Right cardiac atrium (tissue), 5 donors: ENCODE measurements at regions of chr11 and their contacts with region 1.

Region 1: GRCh38 chr11:12888525-12889158 is 120.5 kb upstream of the RASSF10 start:
- DNase-seq: peak; percentile 90 to 97 (median 92)
- ATAC-seq: peak; percentile 91 to 94
- H3K4me3 ChIP-seq: no peak overlapping the region
- H3K27ac ChIP-seq: peak overlapping the region; percentile 93
- H3K4me1 ChIP-seq: peaks cover 14% of the 10 kb centered on the region
- H3K27me3 ChIP-seq: no peaks in the 10 kb centered on the region

Region 2: DNA sequence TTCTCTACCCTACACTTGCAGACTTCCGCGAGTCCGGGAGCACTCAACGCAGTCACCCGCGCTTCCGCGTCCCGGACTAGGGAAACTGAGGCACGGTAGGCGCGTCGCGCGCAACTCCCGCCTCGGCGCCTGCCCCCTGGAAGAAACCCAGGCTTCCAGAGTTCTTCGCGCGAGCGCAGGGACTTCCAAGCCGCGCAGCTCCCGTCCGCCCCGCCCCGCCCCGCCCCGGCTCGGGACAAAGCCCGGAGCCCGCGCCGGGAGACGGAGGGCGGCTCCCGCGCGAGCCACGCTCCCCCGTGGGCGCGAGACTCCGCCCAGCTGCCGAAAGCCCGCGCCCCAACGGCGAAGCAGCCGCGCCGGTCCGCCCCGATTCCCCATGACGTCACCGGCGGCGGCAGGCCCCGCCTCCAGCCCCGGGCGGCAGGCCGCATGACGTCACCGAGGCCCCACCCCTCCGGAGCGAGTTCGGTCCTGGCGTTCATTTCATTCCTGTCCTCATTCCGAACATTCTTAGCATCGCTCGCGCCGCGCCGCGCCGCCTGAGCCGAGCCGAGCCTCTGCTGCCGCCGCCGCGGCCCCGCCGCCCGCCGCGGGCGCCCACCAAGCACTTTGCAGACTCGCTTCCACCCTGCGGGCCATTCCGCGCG is 214.6 kb before region 1 on chr11 and contains the start of gene TEAD1:
- intact Hi-C with region 1: loop called (anchors 5 to 10 kb)
- DNase-seq: peak; percentile 96 to 99 (median 98)
- ATAC-seq: peak; percentile 98
- H3K4me3 ChIP-seq: peak within 1 kb of the TSS; percentile 92
- H3K27ac ChIP-seq: peak within 1 kb of the TSS; percentile 93
- H3K4me1 ChIP-seq: no peaks in the 10 kb centered on the region
- H3K27me3 ChIP-seq: no peaks in the 10 kb centered on the region
- total RNA-seq, gene TEAD1: 81.3 to 105 (median 98.4) TPM

Region 3: DNA sequence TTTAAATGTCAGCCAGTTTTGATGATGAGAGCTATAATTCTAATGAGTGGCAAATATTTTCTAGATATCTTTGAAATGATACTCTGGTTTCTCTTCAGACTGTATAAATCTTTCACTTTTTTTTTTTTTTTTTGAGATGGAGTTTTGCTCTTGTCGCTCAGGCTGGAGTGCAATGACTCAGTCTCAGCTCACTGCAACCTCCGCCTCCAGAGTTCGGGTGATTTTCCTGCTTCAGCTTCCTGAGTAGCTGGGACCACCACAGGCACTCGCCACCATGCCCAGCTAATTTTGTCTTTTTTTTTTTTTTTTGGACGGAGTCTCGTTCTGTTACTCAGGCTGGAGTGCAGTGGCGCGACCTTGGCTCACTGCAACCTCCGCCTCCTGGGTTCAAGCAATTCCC is 100.8 kb before region 1 on chr11:
- intact Hi-C with region 1: no loop called
- DNase-seq: peak in 1 of 3 donors; percentile 39
- ATAC-seq: no peak
- H3K4me3 ChIP-seq: no peak overlapping the region
- H3K27ac ChIP-seq: no peak overlapping the region
- H3K4me1 ChIP-seq: peaks cover 6% of the 10 kb centered on the region
- H3K27me3 ChIP-seq: no peaks in the 10 kb centered on the region

Region 4: DNA sequence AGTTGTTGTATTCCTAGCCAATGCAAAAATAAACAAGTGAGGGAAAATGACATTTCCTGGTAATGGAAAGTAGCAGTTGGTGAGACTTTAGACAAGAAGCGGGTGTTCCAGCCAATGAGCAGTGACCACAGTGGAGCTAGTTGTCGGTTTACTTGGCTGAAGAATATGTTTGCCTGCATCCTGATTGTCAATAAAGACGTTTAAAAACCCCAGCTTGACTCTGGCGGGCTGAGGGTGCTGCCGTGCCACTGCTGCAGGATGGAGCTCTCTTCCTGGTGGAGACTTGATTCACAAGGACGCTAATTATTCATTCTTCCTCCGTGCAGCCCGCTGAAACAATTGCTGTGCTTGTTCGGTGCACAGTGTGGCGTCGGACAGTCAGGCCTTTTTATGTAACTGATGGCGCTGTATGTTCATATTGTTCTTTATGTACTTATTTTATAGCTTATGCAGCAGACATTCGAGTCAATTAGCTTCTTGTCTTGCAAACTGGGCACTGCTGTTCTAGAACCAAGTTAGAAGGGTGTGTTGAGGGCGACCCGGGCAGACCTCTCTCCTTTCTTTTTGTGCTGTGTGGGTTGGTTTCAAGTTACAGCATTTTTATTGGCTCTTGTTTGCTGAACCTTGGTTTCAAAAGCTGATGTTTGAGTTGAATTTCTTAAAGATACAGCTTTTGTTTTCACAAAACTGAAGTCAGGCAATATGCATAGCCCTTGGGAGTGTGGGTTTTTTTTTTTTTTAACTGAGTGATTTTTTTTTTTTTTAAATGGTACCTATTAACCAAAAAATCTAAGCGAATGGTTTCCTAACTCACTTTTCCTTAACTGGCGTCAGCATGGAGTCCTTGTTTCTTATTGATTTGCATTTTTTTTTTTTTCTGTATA is 60.5 kb before region 1 on chr11:
- intact Hi-C with region 1: loop called in 2 of 4 experiments (anchors 10 kb)
- DNase-seq: peak in 2 of 3 donors; percentile 64 to 72
- ATAC-seq: peak; percentile 83 to 87
- H3K4me3 ChIP-seq: peak overlapping the region; percentile 63
- H3K27ac ChIP-seq: peak overlapping the region; percentile 87
- H3K4me1 ChIP-seq: peaks cover 21% of the 10 kb centered on the region
- H3K27me3 ChIP-seq: no peaks in the 10 kb centered on the region

Region 5: GRCh38 chr11:12841946-12842630 is 46.6 kb before region 1 on chr11:
- intact Hi-C with region 1: no loop called
- DNase-seq: no peak
- ATAC-seq: peak in 1 of 2 donors; percentile 63
- H3K4me3 ChIP-seq: no peak overlapping the region
- H3K27ac ChIP-seq: peak overlapping the region; percentile 58
- H3K4me1 ChIP-seq: peaks cover 18% of the 10 kb centered on the region
- H3K27me3 ChIP-seq: no peaks in the 10 kb centered on the region

Region 6: GRCh38 chr11:12950681-12951080 is 62.0 kb after region 1 on chr11:
- intact Hi-C with region 1: no loop called
- DNase-seq: no peak
- ATAC-seq: no peak
- H3K4me3 ChIP-seq: no peak overlapping the region
- H3K27ac ChIP-seq: no peak overlapping the region
- H3K4me1 ChIP-seq: no peaks in the 10 kb centered on the region
- H3K27me3 ChIP-seq: no peaks in the 10 kb centered on the region